ENCODE measurements at regions of chr1 and their contacts with region 1.

Region 1: DNA sequence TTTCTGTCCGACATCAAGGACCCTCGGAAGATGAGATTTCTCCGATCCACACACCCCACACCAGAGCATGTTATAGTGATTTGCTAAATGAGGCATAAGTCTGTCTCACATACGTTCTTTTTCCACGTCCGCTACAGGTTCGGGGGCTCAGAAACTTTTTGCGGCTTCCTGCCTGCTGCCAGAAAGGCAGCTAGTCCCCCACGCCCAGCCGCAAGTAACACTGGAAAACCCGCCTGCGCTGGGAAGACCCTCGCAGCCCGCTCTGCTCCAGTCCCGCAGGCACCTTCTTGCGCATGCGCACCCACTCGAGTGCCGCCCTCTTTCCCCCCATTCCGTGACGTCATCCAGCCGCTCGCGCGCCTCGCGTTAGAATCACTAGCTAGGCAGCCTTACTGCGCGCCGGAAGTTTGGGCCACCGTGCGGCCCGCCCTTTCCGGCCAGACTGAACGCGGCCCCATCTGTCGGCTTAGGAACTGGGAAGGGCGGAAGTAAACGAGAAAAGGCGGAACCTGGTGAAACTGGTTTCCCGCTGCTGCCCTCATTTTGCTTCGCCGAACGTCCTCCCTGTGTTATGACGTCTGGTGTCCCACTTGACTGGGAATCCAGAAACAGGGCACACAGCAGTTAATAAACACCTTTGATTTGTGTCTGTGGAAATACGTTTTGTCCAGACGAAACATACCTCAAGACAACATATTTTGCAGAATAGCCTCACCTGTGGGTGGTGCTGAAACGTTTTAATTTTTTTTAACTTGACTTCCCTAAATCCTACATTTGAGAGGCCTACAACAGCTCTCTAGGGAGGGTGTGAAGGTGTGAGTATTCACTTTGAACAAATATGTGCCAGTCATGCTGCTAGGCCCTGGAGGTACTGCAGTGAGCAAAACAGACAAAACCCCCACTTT is at the start of gene C1orf74:
- DNase-seq: peak; percentile 99
- ATAC-seq: peak; percentile 98
- H3K4me3 Mint-ChIP-seq: peak within 1 kb of the TSS; percentile 96
- H3K27ac Mint-ChIP-seq: peak within 1 kb of the TSS; percentile 96
- H3K4me1 Mint-ChIP-seq: peaks cover 39% of the 10 kb centered on the region
- H3K27me3 Mint-ChIP-seq: no peaks in the 10 kb centered on the region
- CTCF ChIP-seq: no peak
- total RNA-seq, gene C1orf74: 2.8 to 3.0 TPM

Region 2: GRCh38 chr1:209761011-209761635 is 23.4 kb before region 1 on chr1:
- CTCF ChIA-PET with region 1: interaction called, 4 read pairs
- POLR2A ChIA-PET with region 1: interaction called, 10 read pairs
- intact Hi-C with region 1: no loop called
- DNase-seq: no peak
- ATAC-seq: no peak
- H3K4me3 Mint-ChIP-seq: peak overlapping the region; percentile 8
- H3K27ac Mint-ChIP-seq: peak overlapping the region; percentile 83
- H3K4me1 Mint-ChIP-seq: peaks cover 70% of the 10 kb centered on the region
- H3K27me3 Mint-ChIP-seq: no peaks in the 10 kb centered on the region
- CTCF ChIP-seq: no peak

Region 3: GRCh38 chr1:209769171-209769904 is 15.2 kb before region 1 on chr1:
- CTCF ChIA-PET with region 1: interaction called, 17 read pairs
- POLR2A ChIA-PET with region 1: interaction called, 62 read pairs
- intact Hi-C with region 1: loop called (anchors 1 kb)
- DNase-seq: peak; percentile 94
- ATAC-seq: peak; percentile 67
- H3K4me3 Mint-ChIP-seq: no peak overlapping the region
- H3K27ac Mint-ChIP-seq: no peak overlapping the region
- H3K4me1 Mint-ChIP-seq: peaks cover 39% of the 10 kb centered on the region
- H3K27me3 Mint-ChIP-seq: no peaks in the 10 kb centered on the region
- CTCF ChIP-seq: no peak

Region 4: DNA sequence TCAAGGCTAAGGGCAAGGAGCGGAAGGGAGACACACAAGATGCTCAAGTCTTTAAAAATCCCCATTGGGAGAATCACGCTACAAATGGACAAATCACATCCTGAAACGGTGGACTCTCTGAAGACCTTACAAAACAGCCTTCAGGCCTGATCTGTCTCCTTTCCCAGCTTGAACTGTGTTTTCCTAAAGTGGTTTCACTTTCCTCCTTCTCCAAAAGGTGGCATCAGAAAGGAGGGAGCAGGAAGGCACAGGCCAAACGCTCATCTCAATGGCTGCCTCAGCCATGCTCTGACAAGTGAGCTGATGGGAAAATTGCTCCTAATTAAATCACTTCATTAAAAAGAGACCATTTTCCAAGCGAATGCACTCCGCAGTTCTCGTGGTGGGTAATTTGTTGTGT is 91.0 kb after region 1 on chr1:
- CTCF ChIA-PET with region 1: no interaction called
- POLR2A ChIA-PET with region 1: no interaction called
- intact Hi-C with region 1: no loop called
- DNase-seq: no peak
- ATAC-seq: no peak
- H3K4me3 Mint-ChIP-seq: no peak overlapping the region
- H3K27ac Mint-ChIP-seq: no peak overlapping the region
- H3K4me1 Mint-ChIP-seq: no peaks in the 10 kb centered on the region
- H3K27me3 Mint-ChIP-seq: peaks cover 29% of the 10 kb centered on the region
- CTCF ChIP-seq: no peak

Measured in activated CD8-positive, alpha-beta T cell treated with anti-CD3 and anti-CD28 coated beads for 36 hours (primary cell).